ENCODE measurements at regions of chr22 and their contacts with region 1.

Region 1: DNA sequence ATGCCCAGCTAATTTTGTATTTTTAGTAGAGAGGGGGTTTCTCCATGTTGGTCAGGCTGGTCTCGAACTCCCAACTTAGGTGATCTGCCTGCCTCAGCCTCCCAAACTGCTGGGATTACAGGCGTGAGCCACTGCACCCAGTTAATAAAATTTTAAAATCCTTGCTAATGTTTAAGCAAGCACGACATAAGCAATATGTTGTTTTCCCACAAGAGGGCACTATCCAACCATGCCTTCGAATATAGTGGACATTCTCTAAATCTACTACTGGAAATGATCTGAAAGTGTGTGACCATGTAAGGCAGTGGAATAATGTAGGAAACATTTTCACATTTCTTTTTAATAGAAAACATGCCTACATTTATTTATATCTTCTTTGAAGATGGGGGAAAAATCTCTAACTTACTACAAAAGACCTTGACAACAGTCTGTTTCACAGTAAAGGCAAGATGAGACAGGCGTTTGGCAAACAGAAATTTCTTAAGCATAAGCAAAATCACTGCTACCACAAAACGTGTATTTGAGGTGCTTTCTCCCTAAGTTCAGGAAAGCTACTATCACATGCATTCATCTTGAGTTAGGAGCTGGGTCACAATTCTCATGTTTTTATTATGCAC is 38.2 kb downstream of the PITPNB start:
- DNase-seq: peak; percentile 23
- CTCF ChIP-seq: peak; percentile 66

Region 2: DNA sequence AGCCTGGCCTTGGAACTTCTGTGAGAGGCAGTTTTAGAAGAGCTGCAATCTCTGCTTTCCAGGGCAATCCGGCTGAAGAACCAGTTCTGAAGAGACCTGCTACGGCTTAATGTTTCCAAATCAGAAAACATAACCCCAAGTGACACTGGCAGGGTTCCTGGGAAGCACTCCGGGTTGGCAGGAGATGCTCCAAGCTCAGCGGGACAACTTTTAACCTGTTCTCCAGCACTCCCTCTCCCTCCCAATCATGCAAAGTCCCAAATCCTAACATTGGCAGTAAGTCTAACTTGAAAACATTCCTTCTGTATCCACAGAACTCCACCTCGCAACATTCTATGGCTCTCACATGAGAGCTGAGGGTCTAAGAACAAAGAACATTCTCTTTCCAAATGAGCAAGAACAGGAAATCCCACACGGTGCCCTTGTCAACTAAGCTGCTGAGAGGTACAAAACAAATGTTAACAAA is 30.9 kb before region 1 on chr22:
- CTCF ChIA-PET with region 1: interaction called, 14 read pairs
- POLR2A ChIA-PET with region 1: no interaction called
- DNase-seq: no peak
- CTCF ChIP-seq: no peak

Region 3: DNA sequence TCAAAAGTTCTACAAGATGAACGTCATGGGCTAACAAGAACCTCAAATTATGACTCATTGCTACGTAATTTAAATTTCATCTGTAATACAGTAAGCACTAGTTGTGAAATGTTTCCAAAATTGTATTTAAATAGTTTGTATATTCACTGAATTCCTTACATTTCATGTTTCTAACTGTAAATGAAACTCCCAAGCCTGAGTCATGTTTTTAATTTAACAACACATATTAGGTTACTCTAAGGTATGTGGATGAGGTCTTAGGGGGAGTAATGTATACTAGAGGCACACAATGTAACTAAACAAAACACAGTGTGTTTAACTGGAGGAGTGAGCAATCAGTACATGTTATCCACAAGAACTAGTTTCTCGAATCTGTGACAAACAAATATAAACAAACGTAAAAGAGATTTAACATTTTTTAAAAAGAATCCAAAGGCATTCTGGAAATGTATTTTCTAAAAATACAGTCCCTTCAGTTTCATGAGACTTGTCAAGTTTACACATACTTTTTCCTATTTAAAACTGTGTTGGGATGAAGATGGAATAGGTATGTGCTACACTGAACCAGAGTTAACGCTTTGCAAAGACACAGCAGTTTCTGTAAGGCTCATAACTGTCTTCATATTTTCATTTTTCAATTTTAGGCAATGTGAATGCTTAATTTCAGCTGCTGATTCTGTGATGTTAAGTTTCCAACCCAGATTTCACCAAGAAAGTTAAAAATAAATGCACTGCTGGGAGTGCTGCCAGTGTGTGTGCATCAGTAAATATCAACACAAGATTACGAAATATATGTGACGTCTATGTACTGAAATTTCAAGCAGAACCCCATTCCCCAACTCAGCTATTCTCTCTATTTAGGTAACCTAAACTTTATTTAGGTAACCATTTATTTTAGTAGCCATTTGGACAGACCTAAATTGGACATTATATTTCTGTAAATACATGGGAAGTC is 14.5 kb before region 1 on chr22:
- CTCF ChIA-PET with region 1: interaction called, 32 read pairs
- POLR2A ChIA-PET with region 1: no interaction called
- DNase-seq: no peak
- CTCF ChIP-seq: no peak

Region 4: GRCh38 chr22:27895600-27895999 is 14.7 kb after region 1 on chr22:
- CTCF ChIA-PET with region 1: interaction called, 128 read pairs
- POLR2A ChIA-PET with region 1: no interaction called
- DNase-seq: peak; percentile 69
- CTCF ChIP-seq: no peak

Region 5: DNA sequence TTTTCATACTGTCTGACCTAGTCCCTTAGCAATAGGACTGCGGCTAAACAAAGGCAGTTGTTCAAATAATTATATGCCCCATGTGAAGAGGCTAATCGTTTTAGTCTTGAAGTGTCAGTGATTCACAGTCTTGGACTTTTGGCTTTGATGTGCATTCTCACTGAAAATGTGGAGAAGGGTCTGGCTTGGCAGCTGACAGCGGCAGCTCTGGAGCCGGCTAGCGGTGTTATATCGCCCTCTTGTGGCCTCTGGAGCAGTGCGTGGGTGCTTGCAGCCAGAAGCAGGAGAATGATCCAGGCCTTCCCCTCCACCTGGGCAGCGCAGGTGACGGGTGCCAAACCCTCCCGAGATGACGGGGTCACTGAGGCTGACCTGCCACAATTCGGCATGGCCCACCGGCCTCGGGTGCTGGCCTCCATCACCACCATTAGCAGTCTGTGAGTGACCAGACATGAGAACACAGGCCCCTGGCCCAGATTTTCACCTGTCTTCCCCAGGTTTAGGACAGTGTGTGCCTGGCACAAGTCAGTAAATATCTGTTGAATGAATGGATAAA is 128.5 kb after region 1 on chr22:
- CTCF ChIA-PET with region 1: interaction called, 66 read pairs
- POLR2A ChIA-PET with region 1: no interaction called
- DNase-seq: peak; percentile 90
- CTCF ChIP-seq: peak; percentile 98

Region 6: DNA sequence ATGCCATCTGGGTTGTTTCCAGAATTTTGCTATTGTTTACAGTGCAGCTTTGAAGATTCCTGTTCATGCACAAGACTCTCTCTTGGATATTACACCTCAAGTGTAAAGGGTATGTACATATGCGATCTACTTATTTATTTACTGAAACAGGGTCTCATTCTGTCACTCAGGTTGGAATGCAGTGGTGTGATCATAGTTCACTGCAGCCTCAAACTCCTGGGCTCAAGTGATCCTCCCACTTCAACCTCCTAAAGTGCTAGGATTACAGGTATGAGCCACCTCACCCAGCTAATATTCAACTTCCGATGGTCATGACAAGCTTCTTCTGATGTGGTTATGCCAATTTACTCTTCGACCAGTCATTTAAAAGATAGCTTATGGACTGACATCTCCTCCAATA is 196.3 kb after region 1 on chr22:
- CTCF ChIA-PET with region 1: no interaction called
- POLR2A ChIA-PET with region 1: no interaction called
- DNase-seq: no peak
- CTCF ChIP-seq: no peak

Measured in GM10248 (cell line).